ENCODE measurements at regions of chr13 and their contacts with region 1.

Region 1: GRCh38 chr13:49300739-49301589 is 53.2 kb downstream of the CDADC1 start:
- DNase-seq: peak; percentile 84
- ATAC-seq: peak; percentile 96
- H3K4me3 ChIP-seq: peak overlapping the region in 4 of 5 experiments; percentile 29 to 57 (median 46)
- H3K4me3 Mint-ChIP-seq: peak overlapping the region; percentile 81
- H3K27ac ChIP-seq: no peak overlapping the region
- H3K27ac Mint-ChIP-seq: peak overlapping the region; percentile 66
- H3K4me1 ChIP-seq: peaks cover 4 to 20% of the 10 kb centered on the region in 2 donors
- H3K4me1 Mint-ChIP-seq: peaks cover 30% of the 10 kb centered on the region
- H3K27me3 ChIP-seq: no peaks in the 10 kb centered on the region
- H3K27me3 Mint-ChIP-seq: no peaks in the 10 kb centered on the region
- CTCF ChIP-seq: peak; percentile 91

Region 2: GRCh38 chr13:49110122-49110912 is 190.6 kb before region 1 on chr13:
- CTCF ChIA-PET with region 1: no interaction called
- POLR2A ChIA-PET with region 1: no interaction called
- intact Hi-C with region 1: no loop called
- DNase-seq: peak; percentile 86
- ATAC-seq: peak; percentile 82
- H3K4me3 ChIP-seq: peak overlapping the region; percentile 40 to 97 (median 79)
- H3K4me3 Mint-ChIP-seq: peak overlapping the region; percentile 95
- H3K27ac ChIP-seq: peak overlapping the region in 1 of 2 donors; percentile 63
- H3K27ac Mint-ChIP-seq: peak overlapping the region; percentile 89
- H3K4me1 ChIP-seq: peaks cover 3 to 6% of the 10 kb centered on the region in 2 donors
- H3K4me1 Mint-ChIP-seq: peaks cover 21% of the 10 kb centered on the region
- H3K27me3 ChIP-seq: no peaks in the 10 kb centered on the region
- H3K27me3 Mint-ChIP-seq: no peaks in the 10 kb centered on the region
- CTCF ChIP-seq: no peak

Region 3: GRCh38 chr13:49247643-49248621 is 53.0 kb before region 1 on chr13 and contains the start of gene CDADC1:
- CTCF ChIA-PET with region 1: no interaction called
- POLR2A ChIA-PET with region 1: no interaction called
- intact Hi-C with region 1: loop called (anchors 2 kb)
- DNase-seq: peak; percentile 92
- ATAC-seq: peak; percentile 95
- H3K4me3 ChIP-seq: peak within 1 kb of the TSS; percentile 86 to 92 (median 89)
- H3K4me3 Mint-ChIP-seq: peak within 1 kb of the TSS; percentile 100
- H3K27ac ChIP-seq: peak within 1 kb of the TSS; percentile 76 to 86
- H3K27ac Mint-ChIP-seq: peak within 1 kb of the TSS; percentile 97
- H3K4me1 ChIP-seq: peaks cover 10 to 11% of the 10 kb centered on the region in 2 donors
- H3K4me1 Mint-ChIP-seq: peaks cover 26% of the 10 kb centered on the region
- H3K27me3 ChIP-seq: no peaks in the 10 kb centered on the region
- H3K27me3 Mint-ChIP-seq: no peaks in the 10 kb centered on the region
- CTCF ChIP-seq: no peak
- total RNA-seq, gene CDADC1: 14.5 and 15.1 TPM in 2 replicates

Region 4: GRCh38 chr13:50075619-50076097 is 774.7 kb after region 1 on chr13:
- CTCF ChIA-PET with region 1: no interaction called
- POLR2A ChIA-PET with region 1: no interaction called
- intact Hi-C with region 1: no loop called
- DNase-seq: peak; percentile 59
- ATAC-seq: peak; percentile 38
- H3K4me3 ChIP-seq: peak overlapping the region in 3 of 5 experiments; percentile 5 to 60 (median 8)
- H3K4me3 Mint-ChIP-seq: peak overlapping the region; percentile 78
- H3K27ac ChIP-seq: peak overlapping the region; percentile 35 to 74
- H3K27ac Mint-ChIP-seq: peak overlapping the region; percentile 76
- H3K4me1 ChIP-seq: peaks cover 10 to 57% of the 10 kb centered on the region in 2 donors
- H3K4me1 Mint-ChIP-seq: peaks cover 54% of the 10 kb centered on the region
- H3K27me3 ChIP-seq: no peaks in the 10 kb centered on the region
- H3K27me3 Mint-ChIP-seq: no peaks in the 10 kb centered on the region
- CTCF ChIP-seq: no peak

Region 5: GRCh38 chr13:51070005-51070649 is 1769.2 kb after region 1 on chr13:
- CTCF ChIA-PET with region 1: interaction called, 3 read pairs
- POLR2A ChIA-PET with region 1: no interaction called
- intact Hi-C with region 1: loop called (anchors 1 kb)
- DNase-seq: peak; percentile 83
- ATAC-seq: peak; percentile 91
- H3K4me3 ChIP-seq: no peak overlapping the region
- H3K4me3 Mint-ChIP-seq: no peak overlapping the region
- H3K27ac ChIP-seq: no peak overlapping the region
- H3K27ac Mint-ChIP-seq: no peak overlapping the region
- H3K4me1 ChIP-seq: peaks cover 11 to 19% of the 10 kb centered on the region in 2 donors
- H3K4me1 Mint-ChIP-seq: peaks cover 12% of the 10 kb centered on the region
- H3K27me3 ChIP-seq: peaks cover 0 to 20% (median 10%) of the 10 kb centered on the region in 4 experiments
- H3K27me3 Mint-ChIP-seq: peaks cover 30% of the 10 kb centered on the region
- CTCF ChIP-seq: peak; percentile 97

Measured in B cell (primary cell).